ENCODE measurements at regions of chr20 and their contacts with region 1.

Region 1: GRCh38 chr20:26276554-26277210 is 580.0 kb upstream of the ZNF337 start:
- DNase-seq: no peak
- H3K4me3 ChIP-seq: no peak overlapping the region
- H3K27ac ChIP-seq: no peak overlapping the region
- H3K4me1 ChIP-seq: no peaks in the 10 kb centered on the region
- H3K27me3 ChIP-seq: no peaks in the 10 kb centered on the region
- CTCF ChIP-seq: no peak
- EP300 ChIP-seq: no peak
- POLR2A ChIP-seq: no peak

Region 2: GRCh38 chr20:25565578-25566157 is 711.0 kb before region 1 on chr20:
- intact Hi-C with region 1: no loop called
- DNase-seq: no peak
- H3K4me3 ChIP-seq: no peak overlapping the region
- H3K27ac ChIP-seq: no peak overlapping the region
- H3K4me1 ChIP-seq: peaks cover 3% of the 10 kb centered on the region
- H3K27me3 ChIP-seq: no peaks in the 10 kb centered on the region
- CTCF ChIP-seq: no peak
- EP300 ChIP-seq: no peak
- POLR2A ChIP-seq: no peak

Region 3: DNA sequence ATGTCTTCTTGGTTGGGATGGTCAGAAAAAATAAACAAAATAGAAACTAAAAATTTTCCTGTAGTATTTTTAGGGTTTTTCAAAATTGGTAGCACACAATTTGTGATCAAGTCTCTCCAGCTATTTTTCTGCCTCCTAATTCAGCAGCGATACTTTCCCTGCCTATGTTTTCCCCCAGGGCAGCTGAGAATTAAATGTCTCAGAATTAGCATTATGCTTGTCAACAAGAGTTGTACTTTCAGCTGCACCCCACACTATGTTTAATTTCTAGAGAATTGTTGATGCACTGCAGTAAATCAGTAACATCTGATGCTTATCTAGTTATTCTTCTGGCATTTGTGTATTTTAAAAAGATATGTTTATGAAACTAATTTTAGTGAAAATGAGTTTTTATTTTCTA is 545.8 kb before region 1 on chr20:
- intact Hi-C with region 1: loop called in 1 of 4 experiments (anchors 5 kb)
- DNase-seq: no peak
- H3K4me3 ChIP-seq: no peak overlapping the region
- H3K27ac ChIP-seq: no peak overlapping the region
- H3K4me1 ChIP-seq: no peaks in the 10 kb centered on the region
- H3K27me3 ChIP-seq: no peaks in the 10 kb centered on the region
- CTCF ChIP-seq: no peak
- EP300 ChIP-seq: no peak
- POLR2A ChIP-seq: no peak